Mammary epithelial cell (primary cell): ENCODE measurements at regions of chr20 and their contacts with region 1.

Region 1: GRCh38 chr20:362271-363254 is 15.7 kb downstream of the NRSN2 start:
- DNase-seq: peak; percentile 95
- H3K4me3 ChIP-seq: no peak overlapping the region
- H3K27ac ChIP-seq: peak overlapping the region; percentile 21
- H3K4me1 ChIP-seq: peaks cover 49% of the 10 kb centered on the region
- H3K27me3 ChIP-seq: no peaks in the 10 kb centered on the region
- CTCF ChIP-seq: peak; percentile 80 to 86

Region 2: DNA sequence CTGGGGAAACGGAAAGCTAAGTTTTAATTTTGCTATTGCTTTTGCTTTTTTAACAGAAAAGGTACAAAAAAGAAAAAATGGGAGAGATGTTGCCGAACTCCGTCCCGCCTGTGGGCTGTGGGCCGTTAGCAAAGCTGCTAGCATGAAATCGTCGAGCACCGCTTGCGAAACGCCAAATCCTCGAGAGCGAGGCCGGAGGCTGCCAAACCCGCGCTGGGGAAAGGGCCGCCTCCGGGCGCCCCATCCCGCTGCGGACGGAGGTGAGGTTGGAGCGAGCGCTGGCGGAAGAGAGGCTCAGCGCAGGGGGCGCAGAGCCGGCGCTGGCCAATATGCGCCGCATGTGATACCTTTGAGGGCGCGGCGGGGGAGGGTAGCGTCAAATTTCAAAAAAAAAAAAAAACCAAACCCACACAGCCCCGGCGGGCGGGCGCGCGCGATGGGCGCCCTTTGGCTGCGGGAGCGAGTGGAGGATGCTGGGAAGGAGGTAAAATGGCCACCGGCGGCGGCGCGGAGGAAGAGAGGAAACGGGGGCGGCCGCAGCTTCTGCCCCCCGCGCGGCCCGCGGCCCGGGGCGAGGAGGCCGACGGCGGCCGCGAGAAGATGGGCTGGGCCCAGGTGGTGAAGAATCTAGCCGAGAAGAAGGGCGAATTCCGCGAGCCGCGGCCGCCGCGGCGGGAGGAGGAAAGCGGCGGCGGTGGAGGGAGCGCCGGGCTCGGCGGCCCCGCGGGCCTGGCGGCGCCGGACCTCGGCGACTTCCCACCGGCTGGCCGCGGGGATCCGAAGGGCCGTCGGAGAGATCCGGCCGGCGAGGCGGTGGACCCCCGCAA is 65.3 kb before region 1 on chr20 and contains the start of gene ZCCHC3:
- CTCF ChIA-PET with region 1: no interaction called
- dilution Hi-C with region 1: no loop called
- in situ Hi-C with region 1: no loop called
- intact Hi-C with region 1: no loop called
- DNase-seq: peak; percentile 90
- H3K4me3 ChIP-seq: peak within 1 kb of the TSS; percentile 69 to 84 (median 77)
- H3K27ac ChIP-seq: peak within 1 kb of the TSS; percentile 88
- H3K4me1 ChIP-seq: peaks cover 23% of the 10 kb centered on the region
- H3K27me3 ChIP-seq: no peaks in the 10 kb centered on the region
- CTCF ChIP-seq: peak in 1 of 2 donors; percentile 16
- total RNA-seq, gene ZCCHC3: 9.2 to 11.5 TPM

Region 3: DNA sequence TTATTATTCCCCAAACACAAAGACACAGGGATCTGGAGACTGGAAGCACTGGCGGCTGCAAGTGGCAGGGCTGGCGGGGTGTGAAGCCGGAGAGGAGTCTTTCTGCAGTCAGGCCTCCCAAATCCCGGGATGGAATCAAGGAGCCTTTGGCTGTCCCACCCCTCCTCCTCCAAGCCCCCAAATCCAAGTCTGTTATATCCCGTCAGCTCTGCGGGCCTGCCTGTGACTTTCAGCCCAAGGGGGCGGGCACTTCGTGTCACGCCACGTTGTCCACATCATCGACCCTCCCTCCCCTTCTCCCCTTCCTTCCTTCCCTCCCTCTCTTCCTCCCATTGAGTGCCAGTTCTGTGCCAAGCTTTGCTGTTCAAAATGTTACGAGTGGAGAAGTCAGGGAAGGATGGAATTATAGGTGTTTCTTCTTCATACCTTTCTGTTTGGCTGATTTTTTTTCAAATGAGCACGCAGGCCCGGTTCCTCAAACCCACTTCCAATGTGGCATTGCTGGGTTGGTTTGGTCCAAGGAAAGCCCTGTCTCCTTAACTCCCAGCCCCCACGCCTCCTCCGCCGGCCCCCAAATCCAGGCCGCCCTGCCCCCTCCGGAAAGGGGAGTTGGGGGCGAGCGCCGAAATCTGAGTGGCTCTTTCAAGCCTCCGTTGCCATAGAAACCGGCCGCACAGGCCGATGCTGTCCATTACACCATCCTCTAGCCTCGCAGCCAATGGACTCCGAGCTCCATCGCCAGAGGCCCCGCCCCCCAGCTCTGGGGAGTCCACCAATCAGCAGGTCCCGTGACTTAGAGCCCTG is 52.5 kb before region 1 on chr20:
- CTCF ChIA-PET with region 1: no interaction called
- dilution Hi-C with region 1: loop called (anchors 5 kb)
- in situ Hi-C with region 1: no loop called
- intact Hi-C with region 1: no loop called
- DNase-seq: peak; percentile 36
- H3K4me3 ChIP-seq: no peak overlapping the region
- H3K27ac ChIP-seq: peak overlapping the region; percentile 17
- H3K4me1 ChIP-seq: peaks cover 23% of the 10 kb centered on the region
- H3K27me3 ChIP-seq: no peaks in the 10 kb centered on the region
- CTCF ChIP-seq: no peak

Region 4: DNA sequence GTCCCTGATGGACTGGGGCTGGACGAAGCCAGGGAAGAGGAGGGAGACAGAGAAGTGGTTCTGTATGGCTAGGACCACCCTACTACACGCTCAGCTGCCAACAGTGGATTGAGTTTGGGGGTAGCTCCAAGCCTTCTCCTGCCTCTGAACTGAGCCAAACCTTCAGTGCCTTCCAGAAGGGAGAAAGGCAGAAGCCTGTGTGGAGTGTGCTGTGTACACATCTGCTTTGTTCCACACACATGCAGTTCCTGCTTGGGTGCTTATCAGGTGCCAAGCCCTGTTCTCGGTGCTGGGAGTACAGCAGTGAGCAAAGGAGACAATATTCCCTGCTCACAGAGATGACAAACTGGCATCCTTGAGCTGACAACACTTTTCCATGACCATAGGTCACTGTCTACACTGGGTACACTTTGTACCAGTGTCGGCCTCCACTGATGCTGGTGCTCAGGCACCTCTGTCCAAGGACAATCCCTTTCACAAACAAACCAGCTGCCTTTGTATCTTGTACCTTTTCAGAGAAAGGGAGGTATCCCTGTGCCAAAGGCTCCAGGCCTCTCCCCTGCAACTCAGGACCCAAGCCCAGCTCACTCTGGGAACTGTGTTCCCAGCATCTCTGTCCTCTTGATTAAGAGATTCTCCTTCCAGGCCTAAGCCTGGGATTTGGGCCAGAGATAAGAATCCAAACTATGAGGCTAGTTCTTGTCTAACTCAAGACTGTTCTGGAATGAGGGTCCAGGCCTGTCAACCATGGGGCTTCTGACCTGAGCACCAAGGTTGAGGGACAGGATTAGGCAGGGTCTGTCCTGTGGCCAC is 34.3 kb after region 1 on chr20:
- CTCF ChIA-PET with region 1: no interaction called
- dilution Hi-C with region 1: loop called (anchors 5 kb)
- in situ Hi-C with region 1: no loop called
- intact Hi-C with region 1: loop called (anchors 1 kb)
- DNase-seq: no peak
- H3K4me3 ChIP-seq: no peak overlapping the region
- H3K27ac ChIP-seq: no peak overlapping the region
- H3K4me1 ChIP-seq: peaks cover 18% of the 10 kb centered on the region
- H3K27me3 ChIP-seq: no peaks in the 10 kb centered on the region
- CTCF ChIP-seq: no peak

Region 5: DNA sequence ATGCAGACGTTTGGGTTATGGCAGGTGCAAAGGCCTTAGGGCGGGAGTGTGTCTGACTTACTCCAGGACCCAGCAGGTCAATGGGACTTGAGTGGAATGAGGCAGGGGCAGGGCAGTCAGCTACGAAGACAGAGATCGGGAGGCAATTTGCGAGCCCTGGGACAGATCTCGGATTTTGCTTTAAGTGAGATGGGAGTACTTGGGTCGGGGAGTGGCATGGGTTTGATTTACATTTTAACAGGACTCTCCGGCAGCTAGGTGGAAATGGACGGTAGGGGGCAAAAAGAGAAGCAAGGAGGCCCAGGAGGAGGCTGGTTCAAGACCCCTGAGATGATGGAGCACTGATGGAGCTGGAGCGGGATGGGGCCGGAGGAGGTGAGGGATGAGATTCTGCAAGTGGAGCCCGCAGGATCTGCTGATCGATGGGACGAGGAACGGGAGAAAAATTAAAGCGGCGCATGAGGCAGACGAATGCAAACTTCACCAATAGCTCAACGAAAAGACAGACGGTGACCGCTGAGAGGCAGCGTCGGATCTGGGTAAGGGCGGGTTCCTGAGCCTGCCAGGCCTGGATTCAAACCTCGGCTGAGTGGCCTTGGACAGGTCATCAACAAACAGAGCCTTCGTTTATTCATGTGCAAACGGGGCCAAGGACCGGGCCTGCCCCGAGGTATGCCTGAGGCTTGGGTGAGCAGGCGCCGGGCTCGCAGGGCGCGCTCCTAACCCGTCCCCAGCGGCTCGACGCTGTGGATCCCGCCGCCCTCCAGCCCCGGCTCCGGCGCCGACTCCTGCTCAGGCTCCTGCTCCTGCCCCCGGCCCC is 44.8 kb after region 1 on chr20:
- CTCF ChIA-PET with region 1: interaction called, 3 read pairs
- dilution Hi-C with region 1: no loop called
- in situ Hi-C with region 1: no loop called
- intact Hi-C with region 1: loop called (anchors 1 kb)
- DNase-seq: peak; percentile 77
- H3K4me3 ChIP-seq: peak overlapping the region; percentile 15 to 56 (median 48)
- H3K27ac ChIP-seq: peak overlapping the region; percentile 58
- H3K4me1 ChIP-seq: peaks cover 17% of the 10 kb centered on the region
- H3K27me3 ChIP-seq: no peaks in the 10 kb centered on the region
- CTCF ChIP-seq: peak; percentile 13

Region 6: GRCh38 chr20:478949-479429 is 116.4 kb after region 1 on chr20:
- CTCF ChIA-PET with region 1: no interaction called
- dilution Hi-C with region 1: loop called (anchors 5 kb)
- in situ Hi-C with region 1: loop called (anchors 10 kb)
- intact Hi-C with region 1: no loop called
- DNase-seq: peak; percentile 47
- H3K4me3 ChIP-seq: no peak overlapping the region
- H3K27ac ChIP-seq: no peak overlapping the region
- H3K4me1 ChIP-seq: no peaks in the 10 kb centered on the region
- H3K27me3 ChIP-seq: no peaks in the 10 kb centered on the region
- CTCF ChIP-seq: peak; percentile 36 to 60